CD4-positive, alpha-beta memory T cell (primary cell): ENCODE measurements at regions of chr17 and their contacts with region 1.

Region 1: GRCh38 chr17:76397687-76398487 is 13.5 kb downstream of the SPHK1 start:
- DNase-seq: peak; percentile 73 to 76 (median 74)
- H3K4me3 ChIP-seq: no peak overlapping the region
- H3K4me3 Mint-ChIP-seq: no peak overlapping the region
- H3K27ac ChIP-seq: no peak overlapping the region
- H3K27ac Mint-ChIP-seq: peak overlapping the region in 4 of 7 donors; percentile 5 to 82 (median 51)
- H3K4me1 ChIP-seq: no peaks in the 10 kb centered on the region
- H3K4me1 Mint-ChIP-seq: peaks cover 0 to 4% (median 2%) of the 10 kb centered on the region in 4 donors
- H3K27me3 ChIP-seq: no peaks in the 10 kb centered on the region
- H3K27me3 Mint-ChIP-seq: no peaks in the 10 kb centered on the region

Region 2: DNA sequence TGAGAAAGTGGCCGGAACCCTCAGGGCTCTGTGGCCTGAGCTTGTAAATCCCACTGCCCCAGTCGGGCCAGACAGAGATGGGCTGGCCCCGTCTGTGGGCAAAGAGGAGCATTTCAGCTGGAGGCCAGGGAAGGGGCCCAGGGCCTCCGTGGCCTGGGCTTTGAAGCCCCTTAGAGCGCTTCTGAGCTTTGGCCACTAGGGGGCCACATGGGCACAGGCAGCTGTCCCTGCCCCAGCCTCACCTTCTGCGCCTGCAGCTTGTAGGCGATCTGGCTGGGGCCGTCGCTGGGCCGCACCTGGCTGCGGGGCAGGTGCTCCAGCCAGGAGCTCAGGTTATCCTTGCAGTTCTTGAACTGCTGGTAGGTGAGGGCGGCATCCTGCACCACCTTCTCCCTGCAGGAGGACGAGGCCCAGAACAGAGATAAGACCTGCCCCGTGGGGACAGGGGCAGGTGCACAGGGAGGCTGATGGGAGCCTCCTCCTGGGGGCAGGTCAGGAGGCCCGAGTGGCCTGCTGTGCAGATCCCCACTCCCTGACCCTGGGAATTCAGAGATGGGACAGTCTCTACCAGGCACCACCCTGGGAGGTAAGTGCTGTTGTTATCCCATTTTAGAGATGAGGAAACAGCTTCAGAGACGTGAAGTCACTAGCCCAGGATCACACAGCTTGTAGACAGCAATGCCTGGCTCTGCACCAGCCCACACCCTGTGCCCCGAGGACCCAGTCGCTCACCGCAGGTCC is 383.5 kb before region 1 on chr17:
- CTCF ChIA-PET with region 1: interaction called, 20 read pairs
- POLR2A ChIA-PET with region 1: no interaction called
- intact Hi-C with region 1: no loop called
- DNase-seq: peak; percentile 72 to 79 (median 74)
- H3K4me3 ChIP-seq: no peak overlapping the region
- H3K4me3 Mint-ChIP-seq: peak overlapping the region in 2 of 8 donors; percentile 34 to 52
- H3K27ac ChIP-seq: no peak overlapping the region
- H3K27ac Mint-ChIP-seq: peak overlapping the region in 2 of 7 donors; percentile 50 to 81
- H3K4me1 ChIP-seq: peaks cover 8% of the 10 kb centered on the region
- H3K4me1 Mint-ChIP-seq: peaks cover 3 to 11% (median 6%) of the 10 kb centered on the region in 4 donors
- H3K27me3 ChIP-seq: no peaks in the 10 kb centered on the region
- H3K27me3 Mint-ChIP-seq: no peaks in the 10 kb centered on the region

Region 3: DNA sequence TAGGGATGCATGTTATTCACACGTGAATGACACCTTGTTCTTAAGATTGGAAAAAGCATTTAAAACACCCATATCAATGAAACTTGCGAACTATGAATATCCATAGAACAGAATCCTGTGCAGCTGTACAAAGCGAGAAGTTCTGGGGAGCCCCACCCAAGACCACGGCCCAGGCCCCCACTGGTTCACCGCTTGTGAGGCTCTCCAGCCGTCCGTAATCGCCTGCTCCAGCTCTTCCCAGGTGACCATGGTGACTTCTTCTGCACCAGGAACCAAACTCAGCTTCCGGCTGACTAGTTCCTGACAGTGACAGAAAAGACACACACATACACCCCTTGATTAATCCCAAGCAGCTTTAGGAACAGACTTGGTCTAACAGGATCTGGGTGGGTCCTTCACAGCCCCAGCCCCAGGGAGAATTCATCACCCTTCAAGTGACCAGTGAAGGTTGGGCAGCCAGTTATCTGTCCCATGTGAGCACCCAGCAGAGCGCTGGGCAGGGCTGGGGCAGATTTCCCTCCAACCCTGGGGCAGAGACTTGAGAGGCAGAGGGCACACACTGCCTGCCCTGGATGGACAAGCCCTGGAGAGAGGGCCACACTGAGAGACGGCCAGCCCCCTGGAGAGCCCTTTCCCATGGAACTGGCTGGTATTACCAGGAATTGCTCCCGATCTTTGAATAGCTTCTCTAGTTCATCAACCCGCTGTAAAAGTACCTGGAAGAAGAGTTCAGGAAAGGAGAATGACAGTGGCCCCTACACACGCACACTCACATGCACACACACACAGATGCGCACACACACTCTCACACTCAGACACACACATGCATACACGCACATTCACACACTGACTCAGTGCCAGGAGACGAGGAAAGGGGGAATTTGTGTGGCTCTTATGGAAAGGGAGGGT is 93.4 kb before region 1 on chr17:
- CTCF ChIA-PET with region 1: interaction called, 225 read pairs
- POLR2A ChIA-PET with region 1: no interaction called
- intact Hi-C with region 1: loop called (anchors 1 kb)
- DNase-seq: no peak
- H3K4me3 ChIP-seq: no peak overlapping the region
- H3K4me3 Mint-ChIP-seq: no peak overlapping the region
- H3K27ac ChIP-seq: no peak overlapping the region
- H3K27ac Mint-ChIP-seq: peak overlapping the region in 1 of 7 donors; percentile 71
- H3K4me1 ChIP-seq: no peaks in the 10 kb centered on the region
- H3K4me1 Mint-ChIP-seq: peaks cover 0 to 1% (median 0%) of the 10 kb centered on the region in 4 donors
- H3K27me3 ChIP-seq: no peaks in the 10 kb centered on the region
- H3K27me3 Mint-ChIP-seq: no peaks in the 10 kb centered on the region

Region 4: GRCh38 chr17:76327696-76328095 is 70.2 kb before region 1 on chr17:
- CTCF ChIA-PET with region 1: interaction called, 14 read pairs
- POLR2A ChIA-PET with region 1: no interaction called
- intact Hi-C with region 1: no loop called
- DNase-seq: no peak
- H3K4me3 ChIP-seq: no peak overlapping the region
- H3K4me3 Mint-ChIP-seq: no peak overlapping the region
- H3K27ac ChIP-seq: no peak overlapping the region
- H3K27ac Mint-ChIP-seq: no peak overlapping the region
- H3K4me1 ChIP-seq: no peaks in the 10 kb centered on the region
- H3K4me1 Mint-ChIP-seq: peaks cover 0 to 5% (median 3%) of the 10 kb centered on the region in 4 donors
- H3K27me3 ChIP-seq: no peaks in the 10 kb centered on the region
- H3K27me3 Mint-ChIP-seq: no peaks in the 10 kb centered on the region

Region 5: DNA sequence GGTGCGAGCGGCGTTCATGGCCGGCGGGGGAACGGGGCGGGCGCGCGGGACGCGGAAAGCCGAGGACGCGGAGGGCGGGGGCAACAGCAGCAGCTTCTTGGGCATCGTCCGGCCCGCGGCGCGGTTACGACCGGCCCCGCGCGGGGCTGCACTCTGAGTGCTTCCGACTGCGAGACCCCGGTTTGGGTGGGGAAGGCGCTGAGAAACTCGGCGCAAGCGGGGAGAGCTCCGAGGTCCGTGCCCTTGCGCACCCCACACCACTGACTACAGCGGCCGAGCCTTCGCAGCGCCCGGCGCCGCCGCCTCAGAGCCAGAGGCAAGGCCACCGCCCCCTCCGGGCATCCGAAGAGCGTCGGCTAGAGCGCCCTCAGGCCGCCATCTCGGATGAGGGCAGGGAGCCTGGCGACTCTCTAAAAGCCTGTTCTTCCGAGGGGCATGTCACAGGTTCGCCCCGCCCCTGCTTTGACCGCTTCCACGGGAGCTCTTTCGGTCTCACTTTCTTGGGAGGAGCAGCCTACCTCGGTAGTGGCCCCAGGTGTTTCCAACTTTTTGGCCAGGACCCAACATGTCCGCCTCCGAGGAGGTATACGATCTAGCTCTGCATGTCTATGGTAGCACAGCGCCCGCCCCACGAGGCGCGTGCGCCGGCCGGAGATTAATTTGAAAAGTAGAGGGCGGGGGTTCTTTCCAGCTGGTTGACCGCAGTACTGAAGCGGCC is 44.1 kb before region 1 on chr17 and contains the start of gene PRPSAP1:
- CTCF ChIA-PET with region 1: interaction called, 14 read pairs
- POLR2A ChIA-PET with region 1: interaction called, 6 read pairs
- intact Hi-C with region 1: loop called (anchors 1 kb)
- DNase-seq: peak; percentile 82 to 90 (median 85)
- H3K4me3 ChIP-seq: peak within 1 kb of the TSS; percentile 52 to 88
- H3K4me3 Mint-ChIP-seq: peak within 1 kb of the TSS; percentile 92 to 99 (median 96)
- H3K27ac ChIP-seq: peak within 1 kb of the TSS; percentile 77
- H3K27ac Mint-ChIP-seq: peak within 1 kb of the TSS; percentile 82 to 99 (median 98)
- H3K4me1 ChIP-seq: peaks cover 16% of the 10 kb centered on the region
- H3K4me1 Mint-ChIP-seq: peaks cover 12 to 29% (median 20%) of the 10 kb centered on the region in 4 donors
- H3K27me3 ChIP-seq: no peaks in the 10 kb centered on the region
- H3K27me3 Mint-ChIP-seq: no peaks in the 10 kb centered on the region
- total RNA-seq, gene PRPSAP1: 63.4 to 65.8 TPM

Region 6: DNA sequence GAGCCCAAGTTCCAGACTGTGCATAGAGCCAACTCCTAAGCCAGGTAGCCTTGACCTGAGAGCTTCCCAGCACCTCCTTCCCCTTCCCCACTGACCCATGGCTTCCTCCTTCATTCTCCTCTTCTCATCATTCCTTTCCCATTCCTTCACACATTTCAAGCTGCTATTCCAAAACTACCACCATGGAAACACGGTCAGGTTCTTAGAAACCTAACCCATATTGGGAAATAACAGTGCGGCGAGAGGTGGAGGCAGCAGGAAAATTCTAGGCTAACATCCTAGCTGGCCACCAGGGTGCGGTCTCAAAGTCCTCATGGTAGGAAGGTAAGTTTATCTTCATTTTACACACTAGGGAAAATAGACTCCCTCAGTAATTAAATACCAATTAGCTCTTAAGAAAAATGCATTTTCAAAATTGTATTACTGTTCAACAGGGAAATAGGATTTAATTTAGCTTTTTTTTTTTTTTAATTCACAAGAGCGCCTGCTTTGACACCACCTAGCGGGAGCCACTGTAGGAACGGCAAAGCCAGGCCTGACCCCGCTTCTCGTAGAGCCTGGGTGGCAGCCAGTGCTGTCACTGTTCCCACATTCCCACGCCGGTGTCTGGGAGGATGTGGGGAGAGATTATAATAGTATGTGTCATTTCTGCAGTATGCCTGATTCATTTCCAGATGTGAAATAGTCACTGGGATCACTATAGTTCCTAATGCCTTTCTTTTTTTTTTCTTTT is 27.5 kb before region 1 on chr17:
- CTCF ChIA-PET with region 1: interaction called, 18 read pairs
- POLR2A ChIA-PET with region 1: no interaction called
- intact Hi-C with region 1: no loop called
- DNase-seq: no peak
- H3K4me3 ChIP-seq: no peak overlapping the region
- H3K4me3 Mint-ChIP-seq: no peak overlapping the region
- H3K27ac ChIP-seq: no peak overlapping the region
- H3K27ac Mint-ChIP-seq: peak overlapping the region in 1 of 7 donors; percentile 50
- H3K4me1 ChIP-seq: no peaks in the 10 kb centered on the region
- H3K4me1 Mint-ChIP-seq: no peaks in the 10 kb centered on the region
- H3K27me3 ChIP-seq: no peaks in the 10 kb centered on the region
- H3K27me3 Mint-ChIP-seq: peaks cover 0 to 1% of the 10 kb centered on the region in 2 donors

Region 7: GRCh38 chr17:76408052-76408849 is 10.4 kb after region 1 on chr17:
- CTCF ChIA-PET with region 1: interaction called, 97 read pairs
- POLR2A ChIA-PET with region 1: no interaction called
- intact Hi-C with region 1: no loop called
- DNase-seq: peak; percentile 60 to 68 (median 66)
- H3K4me3 ChIP-seq: no peak overlapping the region
- H3K4me3 Mint-ChIP-seq: no peak overlapping the region
- H3K27ac ChIP-seq: no peak overlapping the region
- H3K27ac Mint-ChIP-seq: peak overlapping the region; percentile 6 to 74 (median 59)
- H3K4me1 ChIP-seq: no peaks in the 10 kb centered on the region
- H3K4me1 Mint-ChIP-seq: peaks cover 4 to 14% (median 9%) of the 10 kb centered on the region in 4 donors
- H3K27me3 ChIP-seq: no peaks in the 10 kb centered on the region
- H3K27me3 Mint-ChIP-seq: no peaks in the 10 kb centered on the region